CD14-positive monocyte (primary cell): ENCODE measurements at regions of chr17 and their contacts with region 1.

Region 1: DNA sequence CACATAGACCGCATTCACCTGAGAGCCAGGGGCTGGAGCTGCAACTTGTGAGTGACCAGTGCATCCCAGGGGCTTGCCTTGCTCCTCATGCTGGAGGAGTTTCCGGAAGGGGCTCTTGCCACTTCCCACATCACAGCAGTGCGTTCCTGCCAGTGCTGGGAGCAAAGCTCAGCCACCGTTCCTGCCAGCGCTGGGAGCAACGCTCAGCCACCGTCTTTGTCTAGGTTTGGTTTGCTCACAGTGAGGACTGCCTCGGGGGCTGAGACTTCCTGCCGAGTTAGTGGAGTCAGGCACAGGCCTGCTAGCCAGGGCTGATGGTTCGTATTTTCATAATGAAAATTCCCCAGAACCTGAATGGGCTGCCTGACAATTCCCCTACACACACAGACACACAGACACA is 5.4 kb upstream of the CHRNE start:
- DNase-seq: no peak
- H3K4me3 ChIP-seq: no peak overlapping the region
- H3K4me3 Mint-ChIP-seq: no peak overlapping the region
- H3K27ac ChIP-seq: no peak overlapping the region
- H3K27ac Mint-ChIP-seq: no peak overlapping the region
- H3K4me1 ChIP-seq: peaks cover 12 to 19% of the 10 kb centered on the region in 2 donors
- H3K4me1 Mint-ChIP-seq: peaks cover 4% of the 10 kb centered on the region
- H3K27me3 ChIP-seq: no peaks in the 10 kb centered on the region
- H3K27me3 Mint-ChIP-seq: peaks cover 9 to 21% (median 20%) of the 10 kb centered on the region in 3 donors
- CTCF ChIP-seq: no peak

Region 2: GRCh38 chr17:4986951-4987766 is 78.9 kb after region 1 on chr17 and contains the start of gene CAMTA2:
- intact Hi-C with region 1: loop called (anchors 5 kb)
- DNase-seq: peak; percentile 78 to 82 (median 82)
- H3K4me3 ChIP-seq: peak within 1 kb of the TSS; percentile 78 to 99 (median 81)
- H3K4me3 Mint-ChIP-seq: peak within 1 kb of the TSS; percentile 92 to 96
- H3K27ac ChIP-seq: peak within 1 kb of the TSS; percentile 77 to 95
- H3K27ac Mint-ChIP-seq: peak within 1 kb of the TSS; percentile 84 to 97 (median 96)
- H3K4me1 ChIP-seq: peaks cover 35 to 45% of the 10 kb centered on the region in 2 donors
- H3K4me1 Mint-ChIP-seq: peaks cover 47% of the 10 kb centered on the region
- H3K27me3 ChIP-seq: no peaks in the 10 kb centered on the region
- H3K27me3 Mint-ChIP-seq: peaks cover 0 to 1% (median 0%) of the 10 kb centered on the region in 3 donors
- CTCF ChIP-seq: peak; percentile 93
- polyA plus RNA-seq, gene CAMTA2: 7.1 to 88.9 (median 7.6) TPM